ENCODE measurements at regions of chrX and their contacts with region 1.

Region 1: DNA sequence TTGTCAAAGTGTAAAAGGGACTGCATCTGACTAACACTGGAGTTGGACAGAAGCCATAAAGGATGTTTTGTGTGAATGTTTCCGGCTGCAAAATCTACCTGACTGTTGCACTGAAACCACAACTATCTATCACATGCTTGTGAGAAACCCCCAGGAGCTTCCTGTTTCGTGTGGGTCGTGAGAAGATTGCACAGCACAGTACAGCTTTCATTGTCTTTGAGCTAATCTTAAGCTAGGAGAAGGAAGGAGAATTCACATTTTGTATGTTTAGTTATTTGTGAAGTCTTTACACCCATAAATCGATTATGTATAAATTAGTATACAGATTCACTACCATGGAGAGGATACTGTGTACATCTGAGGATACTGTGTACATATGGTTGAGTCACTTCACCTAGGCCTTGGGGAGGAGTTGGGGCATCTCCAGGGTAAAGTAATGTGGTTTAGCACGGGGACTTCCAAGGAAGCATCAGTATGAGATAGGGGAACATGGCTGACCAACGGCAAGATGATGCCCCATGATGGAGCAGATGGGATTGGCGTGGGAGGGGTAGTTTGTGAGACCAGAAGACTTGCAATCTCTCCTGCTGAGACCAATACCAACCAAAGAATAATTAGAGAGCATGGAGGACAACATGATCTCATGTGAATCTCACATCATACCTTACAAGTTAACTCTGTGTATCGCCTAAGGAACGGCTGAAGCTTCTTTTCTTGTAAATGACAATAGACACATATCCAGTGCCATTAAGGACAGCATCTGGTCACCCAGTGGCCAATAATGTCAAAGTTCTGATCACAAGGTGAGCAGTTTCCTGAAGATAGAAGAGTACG is 43.1 kb upstream of the FAM9C start:
- DNase-seq: no peak
- ATAC-seq: peak; percentile 65
- H3K4me3 Mint-ChIP-seq: peak overlapping the region; percentile 67
- H3K27ac Mint-ChIP-seq: peak overlapping the region; percentile 98
- H3K4me1 Mint-ChIP-seq: peaks cover 96% of the 10 kb centered on the region
- H3K27me3 Mint-ChIP-seq: no peaks in the 10 kb centered on the region
- CTCF ChIP-seq: no peak

Region 2: DNA sequence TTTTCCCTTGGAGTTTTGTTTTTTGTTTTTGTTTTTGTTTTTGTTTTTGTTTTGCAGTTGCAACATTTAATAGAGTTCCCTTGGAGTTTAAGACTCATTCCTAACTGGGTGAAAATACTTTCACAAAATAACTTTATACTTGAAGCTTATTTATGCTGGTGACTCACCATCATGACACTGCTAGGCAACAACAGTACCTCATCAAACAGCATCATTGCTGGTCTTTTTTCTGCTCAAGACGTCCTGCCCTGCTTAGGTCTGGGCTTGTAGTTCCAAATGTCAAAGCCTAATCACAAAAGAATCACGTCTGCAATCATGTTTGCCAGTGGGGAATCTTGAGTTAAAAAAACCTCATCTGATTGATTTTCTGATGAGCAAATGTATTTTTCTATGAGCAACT is 402.0 kb before region 1 on chrX:
- CTCF ChIA-PET with region 1: no interaction called
- POLR2A ChIA-PET with region 1: no interaction called
- intact Hi-C with region 1: no loop called
- DNase-seq: no peak
- ATAC-seq: no peak
- H3K4me3 Mint-ChIP-seq: no peak overlapping the region
- H3K27ac Mint-ChIP-seq: no peak overlapping the region
- H3K4me1 Mint-ChIP-seq: no peaks in the 10 kb centered on the region
- H3K27me3 Mint-ChIP-seq: no peaks in the 10 kb centered on the region
- CTCF ChIP-seq: no peak

Region 3: DNA sequence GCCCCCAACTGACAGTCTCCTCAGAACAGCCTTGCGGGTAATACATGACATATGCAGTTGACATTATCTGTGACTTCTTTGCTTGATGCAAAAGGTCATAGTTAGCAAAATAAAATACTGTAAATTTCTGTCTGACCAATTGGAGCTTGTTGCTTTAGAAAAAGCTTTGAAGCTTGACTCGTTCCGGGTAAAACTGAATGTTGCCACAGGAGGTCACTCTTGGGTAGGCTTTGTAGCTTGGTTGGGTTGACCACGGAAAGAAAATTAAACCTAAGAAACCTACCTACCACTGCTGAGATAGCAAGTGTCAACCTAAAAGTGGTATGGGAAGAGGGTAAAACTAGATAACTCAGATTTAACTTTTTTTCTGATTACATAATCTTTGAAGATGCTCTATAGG is 273.1 kb before region 1 on chrX:
- CTCF ChIA-PET with region 1: interaction called, 4 read pairs
- POLR2A ChIA-PET with region 1: no interaction called
- intact Hi-C with region 1: loop called (anchors 1 kb)
- DNase-seq: no peak
- ATAC-seq: peak; percentile 71
- H3K4me3 Mint-ChIP-seq: no peak overlapping the region
- H3K27ac Mint-ChIP-seq: no peak overlapping the region
- H3K4me1 Mint-ChIP-seq: no peaks in the 10 kb centered on the region
- H3K27me3 Mint-ChIP-seq: no peaks in the 10 kb centered on the region
- CTCF ChIP-seq: no peak

Region 4: DNA sequence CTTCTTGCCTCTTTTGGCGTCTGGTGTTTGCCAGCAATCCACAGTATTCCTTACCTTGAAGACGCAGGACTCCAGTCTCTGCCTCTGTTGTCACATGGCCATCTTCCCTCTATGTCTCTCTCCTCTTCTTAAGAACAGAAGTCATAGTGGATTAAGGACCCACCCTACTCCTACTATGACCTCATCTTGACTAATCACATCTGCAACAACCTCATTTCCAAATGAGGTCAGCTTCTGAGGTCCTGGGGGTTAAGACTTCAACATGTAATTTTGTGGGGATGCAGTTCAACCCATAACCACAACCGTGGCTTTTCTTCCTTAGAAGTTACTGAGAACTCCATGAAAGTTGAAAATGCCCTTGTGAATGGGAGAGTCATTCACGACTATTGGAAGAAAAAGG is 157.8 kb before region 1 on chrX:
- CTCF ChIA-PET with region 1: no interaction called
- POLR2A ChIA-PET with region 1: no interaction called
- intact Hi-C with region 1: no loop called
- DNase-seq: no peak
- ATAC-seq: no peak
- H3K4me3 Mint-ChIP-seq: no peak overlapping the region
- H3K27ac Mint-ChIP-seq: no peak overlapping the region
- H3K4me1 Mint-ChIP-seq: no peaks in the 10 kb centered on the region
- H3K27me3 Mint-ChIP-seq: no peaks in the 10 kb centered on the region
- CTCF ChIP-seq: no peak

Region 5: GRCh38 chrX:12955882-12956703 is 131.4 kb before region 1 on chrX:
- CTCF ChIA-PET with region 1: interaction called, 142 read pairs
- POLR2A ChIA-PET with region 1: interaction called, 87 read pairs
- intact Hi-C with region 1: loop called (anchors 1 kb)
- DNase-seq: no peak
- ATAC-seq: peak; percentile 45
- H3K4me3 Mint-ChIP-seq: peak overlapping the region; percentile 79
- H3K27ac Mint-ChIP-seq: peak overlapping the region; percentile 96
- H3K4me1 Mint-ChIP-seq: peaks cover 79% of the 10 kb centered on the region
- H3K27me3 Mint-ChIP-seq: no peaks in the 10 kb centered on the region
- CTCF ChIP-seq: no peak

Region 6: GRCh38 chrX:13000301-13000811 is 87.2 kb before region 1 on chrX:
- CTCF ChIA-PET with region 1: interaction called, 29 read pairs
- POLR2A ChIA-PET with region 1: interaction called, 179 read pairs
- intact Hi-C with region 1: loop called (anchors 1 kb)
- DNase-seq: no peak
- ATAC-seq: peak; percentile 66
- H3K4me3 Mint-ChIP-seq: peak overlapping the region; percentile 64
- H3K27ac Mint-ChIP-seq: peak overlapping the region; percentile 92
- H3K4me1 Mint-ChIP-seq: peaks cover 72% of the 10 kb centered on the region
- H3K27me3 Mint-ChIP-seq: no peaks in the 10 kb centered on the region
- CTCF ChIP-seq: no peak

Region 7: DNA sequence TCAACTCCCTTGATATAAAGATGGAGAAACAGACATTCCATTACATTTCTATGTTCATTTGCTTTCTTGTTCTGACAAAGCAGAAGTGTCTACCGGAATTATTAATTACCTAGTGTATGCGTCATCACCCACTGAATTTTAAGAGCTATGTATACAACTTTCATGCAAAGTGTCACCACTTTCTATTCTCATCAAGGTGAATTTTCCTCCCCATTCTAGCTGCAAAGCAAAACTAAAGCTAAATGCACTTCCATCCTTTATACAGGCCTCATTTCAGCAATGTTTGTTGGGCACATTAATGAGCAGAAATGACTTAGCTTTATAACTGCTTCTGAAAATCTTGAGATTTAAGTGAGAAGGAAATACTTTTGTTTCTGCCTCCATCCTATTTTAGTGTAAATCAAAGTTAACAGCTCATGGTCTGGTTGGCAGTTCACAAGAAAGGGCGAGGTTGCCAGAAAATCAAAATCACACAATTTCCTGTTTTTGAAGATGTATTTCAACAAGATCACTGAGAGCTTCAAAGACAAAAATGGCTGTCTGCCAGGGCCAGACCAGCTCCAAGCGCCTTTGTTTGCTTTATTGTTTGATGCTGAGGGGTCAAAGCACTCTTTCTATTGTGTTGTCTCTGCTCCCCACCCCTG is 35.9 kb before region 1 on chrX:
- CTCF ChIA-PET with region 1: interaction called, 10 read pairs
- POLR2A ChIA-PET with region 1: interaction called, 26 read pairs
- intact Hi-C with region 1: loop called (anchors 1 kb)
- DNase-seq: no peak
- ATAC-seq: peak; percentile 71
- H3K4me3 Mint-ChIP-seq: peak overlapping the region; percentile 19
- H3K27ac Mint-ChIP-seq: peak overlapping the region; percentile 82
- H3K4me1 Mint-ChIP-seq: peaks cover 57% of the 10 kb centered on the region
- H3K27me3 Mint-ChIP-seq: no peaks in the 10 kb centered on the region
- CTCF ChIP-seq: no peak

Region 8: GRCh38 chrX:13418126-13419097 is 330.9 kb after region 1 on chrX:
- CTCF ChIA-PET with region 1: no interaction called
- POLR2A ChIA-PET with region 1: no interaction called
- intact Hi-C with region 1: loop called (anchors 5 kb)
- DNase-seq: no peak
- ATAC-seq: no peak
- H3K4me3 Mint-ChIP-seq: peak overlapping the region; percentile 35
- H3K27ac Mint-ChIP-seq: peak overlapping the region; percentile 92
- H3K4me1 Mint-ChIP-seq: peaks cover 70% of the 10 kb centered on the region
- H3K27me3 Mint-ChIP-seq: no peaks in the 10 kb centered on the region
- CTCF ChIP-seq: no peak

Region 9: DNA sequence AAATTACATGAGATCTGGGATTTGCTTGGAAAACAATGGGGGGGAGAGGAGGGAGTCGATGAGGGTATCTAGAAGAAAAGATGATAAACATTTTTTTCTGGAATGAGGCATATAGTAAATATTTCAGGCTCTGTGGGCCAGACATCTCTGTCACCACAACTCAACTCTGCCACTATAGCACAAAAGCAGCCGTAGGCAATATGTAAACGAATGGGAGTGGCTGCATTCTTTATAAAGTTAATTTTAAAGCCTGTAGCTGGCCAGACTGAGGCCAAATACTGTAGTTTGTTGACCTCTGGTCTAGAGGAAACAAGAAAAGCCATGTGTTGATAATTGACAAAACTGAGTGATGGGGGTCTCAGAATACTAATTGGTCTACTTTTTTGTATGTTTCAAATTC is 551.3 kb after region 1 on chrX:
- CTCF ChIA-PET with region 1: no interaction called
- POLR2A ChIA-PET with region 1: no interaction called
- intact Hi-C with region 1: no loop called
- DNase-seq: no peak
- ATAC-seq: no peak
- H3K4me3 Mint-ChIP-seq: no peak overlapping the region
- H3K27ac Mint-ChIP-seq: no peak overlapping the region
- H3K4me1 Mint-ChIP-seq: no peaks in the 10 kb centered on the region
- H3K27me3 Mint-ChIP-seq: peaks cover 8% of the 10 kb centered on the region
- CTCF ChIP-seq: no peak

Region 10: GRCh38 chrX:13653022-13653693 is 565.6 kb after region 1 on chrX and contains the start of gene TCEANC:
- CTCF ChIA-PET with region 1: no interaction called
- POLR2A ChIA-PET with region 1: no interaction called
- intact Hi-C with region 1: loop called (anchors 5 kb)
- DNase-seq: peak; percentile 79
- ATAC-seq: peak; percentile 93
- H3K4me3 Mint-ChIP-seq: peak within 1 kb of the TSS; percentile 91
- H3K27ac Mint-ChIP-seq: peak within 1 kb of the TSS; percentile 91
- H3K4me1 Mint-ChIP-seq: peaks cover 13% of the 10 kb centered on the region
- H3K27me3 Mint-ChIP-seq: no peaks in the 10 kb centered on the region
- CTCF ChIP-seq: no peak
- total RNA-seq, gene TCEANC: 5.1 and 5.9 TPM in 2 replicates